Gastrocnemius medialis (tissue), 4 donors: ENCODE measurements at regions of chr2 and their contacts with region 1.

Region 1: GRCh38 chr2:85266146-85267041 is 61.4 kb downstream of the TGOLN2 start:
- DNase-seq: peak; percentile 36 to 45
- ATAC-seq: peak in 1 of 2 donors; percentile 66
- H3K4me3 ChIP-seq: no peak overlapping the region
- H3K27ac ChIP-seq: no peak overlapping the region
- H3K4me1 ChIP-seq: peaks cover 5 to 18% of the 10 kb centered on the region in 2 donors
- H3K27me3 ChIP-seq: no peaks in the 10 kb centered on the region
- CTCF ChIP-seq: peak; percentile 60 to 90 (median 75)
- POLR2A ChIP-seq: no peak

Region 2: DNA sequence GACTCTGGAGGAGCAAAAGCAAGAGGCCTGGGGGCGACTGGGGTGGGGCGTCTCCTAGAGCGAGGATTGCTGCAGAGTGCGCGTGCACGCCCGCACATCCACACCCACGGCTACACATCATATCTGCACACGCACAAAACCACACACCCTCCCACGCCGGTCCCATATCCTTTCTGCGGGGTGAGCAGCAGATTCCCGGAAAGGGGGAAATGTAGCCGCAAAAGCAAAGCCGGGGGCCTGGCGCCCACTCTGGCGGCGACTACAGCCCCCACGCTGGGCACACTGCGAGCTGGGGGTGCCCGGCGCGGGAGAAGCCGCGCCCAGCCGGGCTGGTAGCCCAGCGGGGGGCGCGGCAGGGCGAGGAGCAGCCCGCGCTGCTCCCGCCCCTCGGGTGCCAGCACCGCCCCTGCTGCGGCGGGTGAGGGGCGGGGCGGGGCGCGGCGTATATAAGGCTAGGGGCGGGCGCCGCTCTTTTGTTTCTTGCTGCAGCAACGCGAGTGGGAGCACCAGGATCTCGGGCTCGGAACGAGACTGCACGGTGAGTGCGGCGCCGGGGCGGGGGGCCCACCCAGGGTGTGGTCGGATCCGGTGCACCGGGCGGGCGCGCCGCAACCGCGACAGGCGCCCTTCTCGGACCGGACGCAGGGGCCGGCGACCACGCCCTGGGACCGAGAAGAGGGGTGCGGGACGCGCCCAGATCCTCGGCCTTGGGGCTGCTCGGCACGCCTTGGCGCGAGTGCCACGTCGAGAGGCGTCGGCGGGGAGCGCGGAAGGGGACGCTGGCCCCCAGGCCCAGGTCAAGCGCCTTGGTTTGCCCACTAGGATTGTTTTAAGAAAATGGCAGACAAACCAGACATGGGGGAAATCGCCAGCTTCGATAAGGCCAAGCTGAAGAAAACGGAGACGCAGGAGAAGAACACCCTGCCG is 360.9 kb before region 1 on chr2 and contains the start of gene TMSB10:
- in situ Hi-C with region 1: loop called in 1 of 4 experiments (anchors 25 kb)
- intact Hi-C with region 1: no loop called
- DNase-seq: peak; percentile 56 to 64
- ATAC-seq: peak; percentile 57 to 70
- H3K4me3 ChIP-seq: peak within 1 kb of the TSS; percentile 78 to 96 (median 80)
- H3K27ac ChIP-seq: peak within 1 kb of the TSS; percentile 78 to 87 (median 82)
- H3K4me1 ChIP-seq: peaks cover 5 to 21% of the 10 kb centered on the region in 2 donors
- H3K27me3 ChIP-seq: peaks cover 0 to 8% (median 0%) of the 10 kb centered on the region in 3 donors
- CTCF ChIP-seq: peak in 1 of 5 experiments; percentile 7
- POLR2A ChIP-seq: peak; percentile 74 to 91
- total RNA-seq, gene TMSB10: 329 to 954 (median 486) TPM

Region 3: GRCh38 chr2:85282914-85283313 is 16.5 kb after region 1 on chr2:
- in situ Hi-C with region 1: no loop called
- intact Hi-C with region 1: loop called (anchors 2 kb)
- DNase-seq: no peak
- ATAC-seq: no peak
- H3K4me3 ChIP-seq: no peak overlapping the region
- H3K27ac ChIP-seq: no peak overlapping the region
- H3K4me1 ChIP-seq: peaks cover 0 to 4% of the 10 kb centered on the region in 2 donors
- H3K27me3 ChIP-seq: no peaks in the 10 kb centered on the region
- CTCF ChIP-seq: no peak
- POLR2A ChIP-seq: no peak